Dorsolateral prefrontal cortex (tissue), 120 donors: ENCODE measurements at regions of chr17 and their contacts with region 1.

Region 1: GRCh38 chr17:4199818-4200402 is 56.9 kb downstream of the CYB5D2 start:
- DNase-seq: no peak
- H3K4me3 ChIP-seq: no peak overlapping the region
- H3K27ac ChIP-seq: no peak overlapping the region
- H3K27me3 ChIP-seq: no peaks in the 10 kb centered on the region
- CTCF ChIP-seq: peak; percentile 43 to 85 (median 74)

Region 2: GRCh38 chr17:4407851-4408250 is 207.9 kb after region 1 on chr17:
- intact Hi-C with region 1: loop called in 1 of 2 experiments (anchors 5 kb)
- DNase-seq: peak in 1 of 10 donors; percentile 9
- H3K4me3 ChIP-seq: no peak overlapping the region
- H3K27ac ChIP-seq: no peak overlapping the region
- H3K27me3 ChIP-seq: no peaks in the 10 kb centered on the region
- CTCF ChIP-seq: no peak

Region 3: GRCh38 chr17:4540224-4540641 is 340.3 kb after region 1 on chr17:
- intact Hi-C with region 1: loop called in 1 of 2 experiments (anchors 10 kb)
- DNase-seq: no peak
- H3K4me3 ChIP-seq: peak overlapping the region in 2 of 59 donors; percentile 3 to 31
- H3K27ac ChIP-seq: peak overlapping the region in 56 of 59 donors; percentile 27 to 100 (median 86)
- H3K27me3 ChIP-seq: no peaks in the 10 kb centered on the region
- CTCF ChIP-seq: peak in 36 of 56 donors; percentile 10 to 56 (median 30)